ENCODE measurements at regions of chrX and their contacts with region 1.

Region 1: DNA sequence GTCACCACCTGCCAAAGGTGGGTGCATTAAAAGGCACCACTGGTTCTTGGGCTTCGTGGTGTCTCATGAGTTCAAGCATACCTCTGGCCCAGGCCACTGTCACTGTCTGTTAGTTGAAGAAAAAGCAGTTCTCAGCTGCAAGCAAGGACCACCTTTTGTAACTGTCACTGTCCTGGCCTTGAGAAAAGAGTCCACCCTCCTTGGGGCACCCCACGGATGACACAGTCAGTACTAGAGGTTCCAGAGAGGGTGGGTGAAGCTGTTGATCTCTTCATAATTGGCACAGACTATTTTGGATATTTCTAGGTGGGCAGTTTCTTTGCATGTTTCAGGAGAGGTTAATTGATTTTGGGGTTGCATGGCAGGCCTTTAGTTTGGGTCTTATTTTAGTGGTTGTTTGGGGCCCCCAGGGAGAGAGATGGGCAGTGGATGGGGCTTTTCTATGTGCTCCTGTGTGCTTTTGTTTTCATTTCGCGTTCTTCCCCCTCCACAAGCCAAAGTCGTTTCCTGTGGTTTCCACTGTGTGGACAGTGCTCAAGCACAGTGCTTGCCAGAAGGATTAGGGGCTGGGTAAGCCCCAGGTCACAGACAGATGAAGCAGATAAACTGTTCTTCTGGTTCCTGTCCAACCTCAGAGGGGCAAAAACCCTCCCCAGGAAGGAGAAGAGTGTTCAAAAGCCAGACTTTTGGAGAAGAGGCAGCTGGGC is 156.2 kb upstream of the PPP1R2C start:
- DNase-seq: peak; percentile 43
- H3K4me3 ChIP-seq: no peak overlapping the region
- H3K27ac ChIP-seq: peak overlapping the region in 1 of 4 donors; percentile 36
- H3K4me1 ChIP-seq: no peaks in the 10 kb centered on the region
- H3K27me3 ChIP-seq: no peaks in the 10 kb centered on the region
- CTCF ChIP-seq: no peak
- EP300 ChIP-seq: no peak
- POLR2A ChIP-seq: no peak

Region 2: GRCh38 chrX:42499620-42500019 is 434.6 kb before region 1 on chrX:
- in situ Hi-C with region 1: no loop called
- intact Hi-C with region 1: loop called (anchors 5 kb)
- DNase-seq: no peak
- H3K4me3 ChIP-seq: no peak overlapping the region
- H3K27ac ChIP-seq: no peak overlapping the region
- H3K4me1 ChIP-seq: no peaks in the 10 kb centered on the region
- H3K27me3 ChIP-seq: no peaks in the 10 kb centered on the region
- CTCF ChIP-seq: no peak
- EP300 ChIP-seq: no peak
- POLR2A ChIP-seq: no peak

Region 3: DNA sequence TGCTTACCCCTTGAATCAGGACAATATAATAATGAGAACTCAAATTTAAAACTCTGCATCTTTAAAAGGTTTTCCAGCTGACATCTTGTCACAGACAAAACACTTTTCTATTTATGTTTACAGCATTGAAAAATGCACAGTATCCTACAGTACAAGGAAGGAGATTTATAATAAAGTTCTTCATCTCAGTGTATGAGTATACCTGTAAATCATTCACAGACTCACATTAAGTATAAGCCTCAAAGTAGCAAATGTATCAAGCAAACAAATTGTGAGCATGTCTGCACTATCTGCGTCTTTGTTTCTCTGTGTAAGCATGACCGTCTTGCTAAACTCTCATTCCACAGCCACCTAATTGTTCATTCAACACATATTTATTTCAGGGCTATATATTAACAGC is 209.0 kb before region 1 on chrX:
- in situ Hi-C with region 1: no loop called
- intact Hi-C with region 1: no loop called
- DNase-seq: no peak
- H3K4me3 ChIP-seq: no peak overlapping the region
- H3K27ac ChIP-seq: no peak overlapping the region
- H3K4me1 ChIP-seq: no peaks in the 10 kb centered on the region
- H3K27me3 ChIP-seq: no peaks in the 10 kb centered on the region
- CTCF ChIP-seq: no peak
- EP300 ChIP-seq: no peak
- POLR2A ChIP-seq: no peak

Region 4: DNA sequence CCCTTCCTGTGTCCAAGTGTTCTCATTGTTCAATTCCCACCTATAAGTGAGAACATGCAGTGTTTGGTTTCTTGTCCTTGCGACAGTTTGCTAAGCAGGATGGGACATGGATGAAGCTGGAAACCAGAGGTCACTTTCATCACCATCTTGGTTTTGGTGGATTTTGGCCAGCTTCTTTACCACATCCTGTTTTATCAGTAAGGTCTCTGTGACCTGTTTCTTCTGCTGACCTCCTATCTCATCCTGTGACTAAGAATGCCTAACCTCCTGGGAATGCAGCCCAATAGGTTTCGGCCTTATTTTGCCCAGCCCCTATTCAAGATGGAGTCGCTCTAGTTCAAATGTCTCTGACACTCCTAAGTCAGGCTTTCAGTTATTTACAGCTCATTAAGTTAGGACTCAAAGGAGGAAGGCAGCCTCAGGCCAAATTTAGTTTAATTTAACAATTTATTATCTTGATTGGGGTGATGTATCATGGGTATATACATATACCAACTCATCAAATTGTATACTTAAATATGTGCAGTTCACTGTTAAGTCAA is 1209.0 kb after region 1 on chrX:
- in situ Hi-C with region 1: no loop called
- intact Hi-C with region 1: no loop called
- DNase-seq: no peak
- H3K4me3 ChIP-seq: no peak overlapping the region
- H3K27ac ChIP-seq: no peak overlapping the region
- H3K4me1 ChIP-seq: no peaks in the 10 kb centered on the region
- H3K27me3 ChIP-seq: no peaks in the 10 kb centered on the region
- CTCF ChIP-seq: no peak
- EP300 ChIP-seq: no peak
- POLR2A ChIP-seq: no peak